Activated CD4-positive, alpha-beta T cell treated with anti-CD3 and anti-CD28 coated beads for 36 hours (primary cell): ENCODE measurements at regions of chr14 and their contacts with region 1.

Region 1: GRCh38 chr14:68862954-68863594 is 70.2 kb upstream of the ZFP36L1 start:
- DNase-seq: peak; percentile 87
- ATAC-seq: peak; percentile 49
- H3K4me3 Mint-ChIP-seq: no peak overlapping the region
- H3K27ac Mint-ChIP-seq: no peak overlapping the region
- H3K4me1 Mint-ChIP-seq: no peaks in the 10 kb centered on the region
- H3K27me3 Mint-ChIP-seq: no peaks in the 10 kb centered on the region

Region 2: DNA sequence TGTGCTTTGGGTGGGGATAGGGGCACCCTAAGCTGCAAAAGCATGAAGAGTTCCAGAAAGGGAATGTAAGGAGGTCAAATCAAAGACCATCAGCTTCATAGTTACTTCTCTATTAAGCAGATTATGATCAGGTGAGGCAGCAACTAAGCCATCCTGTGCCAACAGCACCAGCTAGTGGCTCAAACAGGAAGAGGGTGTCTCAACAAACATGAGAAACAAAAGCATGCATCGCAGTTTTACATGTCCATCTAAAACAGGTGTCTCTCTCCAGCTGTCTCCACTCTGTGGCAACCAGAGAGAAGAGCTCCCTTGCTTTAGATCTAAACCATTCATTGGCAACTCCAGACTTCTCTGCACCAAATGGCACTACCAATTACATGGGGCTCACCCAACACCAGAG is 63.2 kb after region 1 on chr14:
- CTCF ChIA-PET with region 1: interaction called, 10 read pairs
- POLR2A ChIA-PET with region 1: no interaction called
- intact Hi-C with region 1: no loop called
- DNase-seq: peak; percentile 51
- ATAC-seq: no peak
- H3K4me3 Mint-ChIP-seq: no peak overlapping the region
- H3K27ac Mint-ChIP-seq: no peak overlapping the region
- H3K4me1 Mint-ChIP-seq: peaks cover 45% of the 10 kb centered on the region
- H3K27me3 Mint-ChIP-seq: no peaks in the 10 kb centered on the region

Region 3: DNA sequence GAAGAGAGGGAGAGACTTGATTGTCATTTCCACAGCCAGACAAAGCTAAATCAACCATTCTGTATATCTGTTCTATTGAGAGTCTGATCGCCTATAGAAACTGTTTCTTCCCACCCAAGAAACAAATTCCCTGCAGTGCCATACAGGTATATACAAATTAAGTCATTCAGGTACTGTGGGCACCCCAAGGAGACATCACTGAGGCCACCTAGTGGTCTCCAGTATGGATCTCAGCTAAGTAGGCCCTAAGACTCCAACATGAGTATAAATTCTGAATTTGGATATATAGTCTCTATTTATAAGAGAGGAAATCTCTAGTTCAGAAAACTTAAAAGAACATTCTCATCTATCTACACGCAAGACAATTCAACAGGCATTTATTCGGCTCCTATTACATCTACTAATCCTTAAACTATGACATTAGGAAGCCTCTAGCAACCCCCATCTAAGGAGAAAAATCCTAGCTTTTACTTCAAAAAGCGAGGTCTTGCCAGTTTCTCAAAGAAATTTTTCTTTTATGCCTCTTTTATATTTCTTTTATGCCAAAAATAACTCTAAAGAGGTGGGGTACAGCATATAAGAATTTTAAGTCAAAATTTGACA is 227.2 kb after region 1 on chr14:
- CTCF ChIA-PET with region 1: interaction called, 16 read pairs
- POLR2A ChIA-PET with region 1: no interaction called
- intact Hi-C with region 1: loop called (anchors 2 to 5 kb)
- DNase-seq: peak; percentile 44
- ATAC-seq: peak; percentile 77
- H3K4me3 Mint-ChIP-seq: no peak overlapping the region
- H3K27ac Mint-ChIP-seq: no peak overlapping the region
- H3K4me1 Mint-ChIP-seq: peaks cover 13% of the 10 kb centered on the region
- H3K27me3 Mint-ChIP-seq: no peaks in the 10 kb centered on the region

Region 4: GRCh38 chr14:69242311-69243224 is 379.5 kb after region 1 on chr14:
- CTCF ChIA-PET with region 1: interaction called, 6 read pairs
- POLR2A ChIA-PET with region 1: no interaction called
- intact Hi-C with region 1: loop called in 1 of 2 experiments (anchors 1 kb)
- DNase-seq: peak; percentile 70
- ATAC-seq: peak; percentile 86
- H3K4me3 Mint-ChIP-seq: no peak overlapping the region
- H3K27ac Mint-ChIP-seq: no peak overlapping the region
- H3K4me1 Mint-ChIP-seq: no peaks in the 10 kb centered on the region
- H3K27me3 Mint-ChIP-seq: no peaks in the 10 kb centered on the region

Region 5: GRCh38 chr14:69519204-69520100 is 656.4 kb after region 1 on chr14:
- CTCF ChIA-PET with region 1: no interaction called
- POLR2A ChIA-PET with region 1: no interaction called
- intact Hi-C with region 1: no loop called
- DNase-seq: no peak
- ATAC-seq: no peak
- H3K4me3 Mint-ChIP-seq: no peak overlapping the region
- H3K27ac Mint-ChIP-seq: no peak overlapping the region
- H3K4me1 Mint-ChIP-seq: no peaks in the 10 kb centered on the region
- H3K27me3 Mint-ChIP-seq: peaks cover 10% of the 10 kb centered on the region